Lower leg skin (tissue), 4 donors: ENCODE measurements at regions of chr20 and their contacts with region 1.

Region 1: DNA sequence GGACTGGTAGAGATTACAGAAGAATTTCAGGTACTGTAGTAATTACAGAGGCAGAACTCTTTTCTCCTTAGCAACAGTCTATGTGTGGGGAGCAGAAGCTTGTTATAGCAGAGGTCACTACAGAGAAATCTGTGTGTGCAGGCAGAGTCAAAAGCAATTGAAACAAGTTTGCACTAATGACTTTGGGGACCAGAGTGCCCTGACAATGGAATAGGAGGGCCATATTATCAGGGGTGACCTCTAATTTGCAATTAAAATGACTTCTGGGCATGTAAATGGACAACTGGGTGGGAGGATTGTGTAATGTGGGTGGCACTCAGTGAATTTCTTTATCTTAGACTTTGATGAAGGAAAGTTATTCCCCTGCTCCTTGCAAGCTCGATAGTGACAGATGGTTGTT is 127.2 kb downstream of the PLCB4 start:
- DNase-seq: no peak
- H3K4me3 ChIP-seq: no peak overlapping the region
- CTCF ChIP-seq: no peak
- POLR2A ChIP-seq: no peak

Region 2: DNA sequence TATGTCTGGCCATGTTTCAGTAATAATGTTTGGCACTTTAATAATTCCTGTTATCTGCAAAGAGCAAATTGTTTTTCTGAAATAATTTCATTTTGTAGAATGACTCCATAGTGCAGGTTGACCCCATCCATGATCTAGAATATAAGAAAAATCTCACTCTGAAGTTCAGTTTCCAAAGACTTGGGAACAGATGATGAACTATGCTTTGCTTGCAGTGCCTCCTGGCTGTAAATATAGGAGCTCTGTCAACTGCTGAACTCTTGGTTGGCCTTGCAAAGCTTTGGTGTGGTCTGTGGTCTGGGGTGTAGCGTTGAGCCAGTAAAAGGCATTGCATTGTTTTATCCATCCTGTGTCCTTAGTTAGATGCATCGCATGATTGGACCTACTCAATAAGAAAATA is 23.2 kb before region 1 on chr20:
- intact Hi-C with region 1: no loop called
- DNase-seq: no peak
- H3K4me3 ChIP-seq: no peak overlapping the region
- CTCF ChIP-seq: no peak
- POLR2A ChIP-seq: no peak

Region 3: GRCh38 chr20:9319687-9320384 is 123.8 kb after region 1 on chr20:
- intact Hi-C with region 1: no loop called
- DNase-seq: no peak
- H3K4me3 ChIP-seq: no peak overlapping the region
- CTCF ChIP-seq: no peak
- POLR2A ChIP-seq: no peak

Region 4: GRCh38 chr20:10586296-10586695 is 1390.2 kb after region 1 on chr20:
- intact Hi-C with region 1: loop called (anchors 5 kb)
- DNase-seq: no peak
- H3K4me3 ChIP-seq: no peak overlapping the region
- CTCF ChIP-seq: no peak
- POLR2A ChIP-seq: no peak